CD14-positive monocyte (primary cell): ENCODE measurements at regions of chr15 and their contacts with region 1.

Region 1: GRCh38 chr15:58357521-58358476 is 74.0 kb upstream of the LIPC start:
- DNase-seq: no peak
- H3K4me3 ChIP-seq: no peak overlapping the region
- H3K4me3 Mint-ChIP-seq: no peak overlapping the region
- H3K27ac ChIP-seq: no peak overlapping the region
- H3K27ac Mint-ChIP-seq: no peak overlapping the region
- H3K4me1 ChIP-seq: peaks cover 24 to 28% of the 10 kb centered on the region in 2 donors
- H3K4me1 Mint-ChIP-seq: peaks cover 28% of the 10 kb centered on the region
- H3K27me3 ChIP-seq: no peaks in the 10 kb centered on the region
- H3K27me3 Mint-ChIP-seq: peaks cover 0 to 6% (median 2%) of the 10 kb centered on the region in 3 donors
- CTCF ChIP-seq: no peak

Region 2: GRCh38 chr15:58307313-58307961 is 50.4 kb before region 1 on chr15:
- intact Hi-C with region 1: loop called in 1 of 2 experiments (anchors 10 kb)
- DNase-seq: no peak
- H3K4me3 ChIP-seq: no peak overlapping the region
- H3K4me3 Mint-ChIP-seq: no peak overlapping the region
- H3K27ac ChIP-seq: no peak overlapping the region
- H3K27ac Mint-ChIP-seq: no peak overlapping the region
- H3K4me1 ChIP-seq: peaks cover 11 to 17% of the 10 kb centered on the region in 2 donors
- H3K4me1 Mint-ChIP-seq: peaks cover 19% of the 10 kb centered on the region
- H3K27me3 ChIP-seq: no peaks in the 10 kb centered on the region
- H3K27me3 Mint-ChIP-seq: no peaks in the 10 kb centered on the region
- CTCF ChIP-seq: no peak

Region 3: DNA sequence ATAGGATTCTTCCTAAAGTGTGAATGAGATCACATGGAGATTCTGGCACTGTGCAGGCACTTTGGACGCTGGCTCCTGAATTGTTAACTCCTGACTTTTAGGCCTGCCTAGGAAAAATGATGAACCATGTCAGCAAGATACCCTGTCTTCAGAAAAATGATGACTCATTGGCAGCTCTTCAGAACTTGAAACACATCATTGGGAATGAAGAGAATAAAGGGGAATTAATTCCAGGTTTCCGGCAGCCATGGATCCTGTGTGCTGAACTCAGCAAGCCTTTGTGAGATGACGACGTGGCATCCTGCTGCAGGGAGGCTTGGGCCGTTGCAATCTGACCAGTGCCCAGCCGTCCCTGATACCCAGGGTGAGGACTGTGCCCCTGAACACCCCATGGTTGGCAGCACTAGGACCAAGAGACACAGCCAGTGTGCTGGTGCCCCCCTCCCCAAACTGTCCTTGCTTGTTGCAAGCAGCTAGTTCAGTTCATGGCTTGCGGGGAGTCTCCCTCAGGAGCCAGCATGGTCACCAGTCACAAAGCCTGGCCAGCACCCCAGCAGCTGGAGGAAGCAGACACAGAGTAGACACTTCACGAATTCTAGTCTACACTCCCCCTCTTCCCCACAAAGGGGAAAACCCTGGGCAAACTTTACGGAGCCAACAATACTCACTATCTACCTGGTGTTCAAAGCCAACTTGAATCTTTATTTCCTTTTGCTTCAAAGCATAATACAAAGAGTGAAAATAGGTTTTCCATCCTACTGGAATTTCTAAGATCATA is 66.2 kb after region 1 on chr15:
- intact Hi-C with region 1: no loop called
- DNase-seq: no peak
- H3K4me3 ChIP-seq: no peak overlapping the region
- H3K4me3 Mint-ChIP-seq: no peak overlapping the region
- H3K27ac ChIP-seq: no peak overlapping the region
- H3K27ac Mint-ChIP-seq: no peak overlapping the region
- H3K4me1 ChIP-seq: no peaks in the 10 kb centered on the region
- H3K4me1 Mint-ChIP-seq: no peaks in the 10 kb centered on the region
- H3K27me3 ChIP-seq: no peaks in the 10 kb centered on the region
- H3K27me3 Mint-ChIP-seq: peaks cover 0 to 4% (median 2%) of the 10 kb centered on the region in 3 donors
- CTCF ChIP-seq: no peak